Activated CD8-positive, alpha-beta T cell treated with anti-CD3 and anti-CD28 coated beads for 36 hours (primary cell): ENCODE measurements at regions of chr7 and their contacts with region 1.

Region 1: GRCh38 chr7:123748734-123749536 is at the start of gene WASL:
- DNase-seq: peak; percentile 86
- ATAC-seq: peak; percentile 81
- H3K4me3 Mint-ChIP-seq: peak within 1 kb of the TSS; percentile 83
- H3K27ac Mint-ChIP-seq: peak within 1 kb of the TSS; percentile 97
- H3K4me1 Mint-ChIP-seq: peaks cover 50% of the 10 kb centered on the region
- H3K27me3 Mint-ChIP-seq: no peaks in the 10 kb centered on the region
- CTCF ChIP-seq: no peak
- total RNA-seq, gene WASL: 5.8 to 5.9 TPM

Region 2: GRCh38 chr7:123674399-123675180 is 74.3 kb before region 1 on chr7:
- CTCF ChIA-PET with region 1: no interaction called
- POLR2A ChIA-PET with region 1: no interaction called
- intact Hi-C with region 1: no loop called
- DNase-seq: no peak
- ATAC-seq: no peak
- H3K4me3 Mint-ChIP-seq: no peak overlapping the region
- H3K27ac Mint-ChIP-seq: no peak overlapping the region
- H3K4me1 Mint-ChIP-seq: no peaks in the 10 kb centered on the region
- H3K27me3 Mint-ChIP-seq: no peaks in the 10 kb centered on the region
- CTCF ChIP-seq: no peak

Region 3: DNA sequence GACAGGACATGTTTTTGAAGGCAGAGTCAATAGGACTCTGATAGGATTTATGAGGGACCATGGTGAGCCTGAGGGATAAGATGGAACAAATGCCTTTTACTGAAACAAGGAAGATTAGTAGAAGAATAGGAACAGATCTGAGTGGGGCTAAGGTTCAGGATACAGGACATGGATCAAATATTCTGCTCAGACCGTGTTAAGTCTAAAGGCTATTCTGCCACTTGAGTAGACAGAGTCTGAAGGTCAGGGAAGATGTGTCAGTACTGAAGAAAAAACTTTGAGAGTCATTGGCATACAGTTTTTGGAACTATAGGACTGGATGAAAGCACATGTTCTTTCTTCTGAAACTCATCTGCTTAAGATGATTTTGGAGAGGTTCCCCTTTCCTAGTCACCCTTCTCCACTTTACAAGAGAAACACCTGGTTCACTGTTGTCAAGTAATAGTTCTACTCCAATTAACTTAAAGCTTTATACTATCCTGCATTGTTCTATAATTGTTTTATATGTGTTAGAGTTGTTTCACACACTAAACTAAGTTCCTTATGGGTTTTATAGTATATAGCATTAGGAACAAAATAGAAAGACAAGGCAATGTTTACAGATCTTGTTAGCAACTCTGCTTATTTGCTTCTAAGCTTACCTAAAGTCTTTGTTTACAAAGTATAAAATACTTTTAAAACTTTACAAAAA is 43.6 kb before region 1 on chr7:
- CTCF ChIA-PET with region 1: interaction called, 12 read pairs
- POLR2A ChIA-PET with region 1: no interaction called
- intact Hi-C with region 1: loop called (anchors 5 kb)
- DNase-seq: no peak
- ATAC-seq: no peak
- H3K4me3 Mint-ChIP-seq: no peak overlapping the region
- H3K27ac Mint-ChIP-seq: peak overlapping the region; percentile 4
- H3K4me1 Mint-ChIP-seq: peaks cover under 1% of the 10 kb centered on the region
- H3K27me3 Mint-ChIP-seq: no peaks in the 10 kb centered on the region
- CTCF ChIP-seq: no peak

Region 4: GRCh38 chr7:123712619-123713018 is 36.3 kb before region 1 on chr7:
- CTCF ChIA-PET with region 1: interaction called, 6 read pairs
- POLR2A ChIA-PET with region 1: interaction called, 3 read pairs
- intact Hi-C with region 1: loop called (anchors 5 kb)
- DNase-seq: no peak
- ATAC-seq: no peak
- H3K4me3 Mint-ChIP-seq: no peak overlapping the region
- H3K27ac Mint-ChIP-seq: peak overlapping the region; percentile 65
- H3K4me1 Mint-ChIP-seq: peaks cover 56% of the 10 kb centered on the region
- H3K27me3 Mint-ChIP-seq: no peaks in the 10 kb centered on the region
- CTCF ChIP-seq: no peak

Region 5: GRCh38 chr7:123727071-123727837 is 21.7 kb before region 1 on chr7:
- CTCF ChIA-PET with region 1: interaction called, 13 read pairs
- POLR2A ChIA-PET with region 1: no interaction called
- intact Hi-C with region 1: no loop called
- DNase-seq: no peak
- ATAC-seq: no peak
- H3K4me3 Mint-ChIP-seq: no peak overlapping the region
- H3K27ac Mint-ChIP-seq: peak overlapping the region; percentile 22
- H3K4me1 Mint-ChIP-seq: peaks cover 54% of the 10 kb centered on the region
- H3K27me3 Mint-ChIP-seq: no peaks in the 10 kb centered on the region
- CTCF ChIP-seq: no peak

Region 6: GRCh38 chr7:123823898-123824753 is 75.2 kb after region 1 on chr7:
- CTCF ChIA-PET with region 1: no interaction called
- POLR2A ChIA-PET with region 1: interaction called, 12 read pairs
- intact Hi-C with region 1: no loop called
- DNase-seq: peak; percentile 84
- ATAC-seq: peak; percentile 94
- H3K4me3 Mint-ChIP-seq: peak overlapping the region; percentile 53
- H3K27ac Mint-ChIP-seq: peak overlapping the region; percentile 80
- H3K4me1 Mint-ChIP-seq: peaks cover 21% of the 10 kb centered on the region
- H3K27me3 Mint-ChIP-seq: peaks cover 19% of the 10 kb centered on the region
- CTCF ChIP-seq: no peak